ENCODE measurements at regions of chr17 and their contacts with region 1.

Region 1: GRCh38 chr17:29777663-29778062 is 152.4 kb downstream of the SSH2 start:
- DNase-seq: no peak
- ATAC-seq: no peak
- H3K4me3 ChIP-seq: no peak overlapping the region
- H3K4me3 Mint-ChIP-seq: no peak overlapping the region
- H3K27ac ChIP-seq: no peak overlapping the region
- H3K27ac Mint-ChIP-seq: no peak overlapping the region
- H3K4me1 ChIP-seq: peaks cover 0 to 7% of the 10 kb centered on the region in 2 experiments
- H3K4me1 Mint-ChIP-seq: peaks cover 8 to 9% (median 9%) of the 10 kb centered on the region in 3 donors
- H3K27me3 ChIP-seq: no peaks in the 10 kb centered on the region
- H3K27me3 Mint-ChIP-seq: no peaks in the 10 kb centered on the region

Region 2: GRCh38 chr17:29640413-29640812 is 137.2 kb before region 1 on chr17:
- CTCF ChIA-PET with region 1: interaction called, 5 to 66 read pairs
- POLR2A ChIA-PET with region 1: no interaction called
- DNase-seq: no peak
- ATAC-seq: no peak
- H3K4me3 ChIP-seq: no peak overlapping the region
- H3K4me3 Mint-ChIP-seq: no peak overlapping the region
- H3K27ac ChIP-seq: no peak overlapping the region
- H3K27ac Mint-ChIP-seq: peak overlapping the region; percentile 65 to 80
- H3K4me1 ChIP-seq: no peaks in the 10 kb centered on the region
- H3K4me1 Mint-ChIP-seq: peaks cover 9 to 26% (median 26%) of the 10 kb centered on the region in 3 donors
- H3K27me3 ChIP-seq: no peaks in the 10 kb centered on the region
- H3K27me3 Mint-ChIP-seq: no peaks in the 10 kb centered on the region

Region 3: DNA sequence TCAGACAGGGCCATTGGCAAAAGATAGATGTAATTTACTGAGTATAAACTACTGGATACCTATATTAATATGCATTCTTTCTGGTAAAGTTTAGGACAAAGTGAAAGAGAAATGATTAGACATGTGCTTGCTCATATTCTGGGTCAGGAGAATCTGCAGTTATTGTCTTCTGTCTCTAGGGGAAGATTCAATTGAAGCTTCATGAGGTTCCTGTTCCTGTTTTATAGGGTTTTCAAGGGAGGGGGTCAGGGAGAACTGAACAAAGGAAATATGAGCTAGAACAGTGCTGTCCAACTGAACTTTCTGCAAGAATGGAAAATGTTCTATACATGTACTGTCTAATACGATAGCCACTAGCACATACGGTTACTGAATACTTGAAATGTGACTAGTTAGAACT is 95.6 kb before region 1 on chr17:
- CTCF ChIA-PET with region 1: interaction called in 1 of 2 experiments, 10 read pairs
- POLR2A ChIA-PET with region 1: no interaction called
- DNase-seq: peak in 1 of 35 experiments; percentile 27
- ATAC-seq: peak in 2 of 4 experiments; percentile 45 to 55
- H3K4me3 ChIP-seq: no peak overlapping the region
- H3K4me3 Mint-ChIP-seq: no peak overlapping the region
- H3K27ac ChIP-seq: peak overlapping the region; percentile 3
- H3K27ac Mint-ChIP-seq: peak overlapping the region; percentile 60 to 76
- H3K4me1 ChIP-seq: peaks cover 4 to 7% of the 10 kb centered on the region in 2 experiments
- H3K4me1 Mint-ChIP-seq: peaks cover 22 to 30% (median 29%) of the 10 kb centered on the region in 3 donors
- H3K27me3 ChIP-seq: no peaks in the 10 kb centered on the region
- H3K27me3 Mint-ChIP-seq: no peaks in the 10 kb centered on the region

Region 4: GRCh38 chr17:29732613-29733012 is 45.0 kb before region 1 on chr17:
- CTCF ChIA-PET with region 1: interaction called in 1 of 2 experiments, 8 read pairs
- POLR2A ChIA-PET with region 1: interaction called in 1 of 2 experiments, 11 read pairs
- DNase-seq: no peak
- ATAC-seq: no peak
- H3K4me3 ChIP-seq: no peak overlapping the region
- H3K4me3 Mint-ChIP-seq: peak overlapping the region in 1 of 3 donors; percentile 8
- H3K27ac ChIP-seq: no peak overlapping the region
- H3K27ac Mint-ChIP-seq: peak overlapping the region; percentile 61 to 65
- H3K4me1 ChIP-seq: peaks cover 7 to 8% of the 10 kb centered on the region in 2 experiments
- H3K4me1 Mint-ChIP-seq: peaks cover 58 to 66% (median 60%) of the 10 kb centered on the region in 3 donors
- H3K27me3 ChIP-seq: no peaks in the 10 kb centered on the region
- H3K27me3 Mint-ChIP-seq: no peaks in the 10 kb centered on the region

Region 5: GRCh38 chr17:30035369-30035768 is 257.7 kb after region 1 on chr17:
- CTCF ChIA-PET with region 1: no interaction called
- POLR2A ChIA-PET with region 1: no interaction called
- DNase-seq: no peak
- ATAC-seq: no peak
- H3K4me3 ChIP-seq: no peak overlapping the region
- H3K4me3 Mint-ChIP-seq: no peak overlapping the region
- H3K27ac ChIP-seq: no peak overlapping the region
- H3K27ac Mint-ChIP-seq: no peak overlapping the region
- H3K4me1 ChIP-seq: peaks cover 0 to 2% of the 10 kb centered on the region in 2 experiments
- H3K4me1 Mint-ChIP-seq: peaks cover 0 to 2% (median 1%) of the 10 kb centered on the region in 3 donors
- H3K27me3 ChIP-seq: peaks cover 0 to 5% of the 10 kb centered on the region in 2 experiments
- H3K27me3 Mint-ChIP-seq: peaks cover 5 to 7% of the 10 kb centered on the region in 2 donors